ENCODE measurements at regions of chr5 and their contacts with region 1.

Region 1: GRCh38 chr5:170100066-170100943 is 5.4 kb upstream of the FOXI1 start:
- DNase-seq: peak; percentile 87
- H3K4me3 Mint-ChIP-seq: no peak overlapping the region
- H3K27ac Mint-ChIP-seq: no peak overlapping the region
- H3K4me1 Mint-ChIP-seq: peaks cover 3% of the 10 kb centered on the region
- H3K27me3 Mint-ChIP-seq: no peaks in the 10 kb centered on the region
- CTCF ChIP-seq: peak; percentile 81

Region 2: DNA sequence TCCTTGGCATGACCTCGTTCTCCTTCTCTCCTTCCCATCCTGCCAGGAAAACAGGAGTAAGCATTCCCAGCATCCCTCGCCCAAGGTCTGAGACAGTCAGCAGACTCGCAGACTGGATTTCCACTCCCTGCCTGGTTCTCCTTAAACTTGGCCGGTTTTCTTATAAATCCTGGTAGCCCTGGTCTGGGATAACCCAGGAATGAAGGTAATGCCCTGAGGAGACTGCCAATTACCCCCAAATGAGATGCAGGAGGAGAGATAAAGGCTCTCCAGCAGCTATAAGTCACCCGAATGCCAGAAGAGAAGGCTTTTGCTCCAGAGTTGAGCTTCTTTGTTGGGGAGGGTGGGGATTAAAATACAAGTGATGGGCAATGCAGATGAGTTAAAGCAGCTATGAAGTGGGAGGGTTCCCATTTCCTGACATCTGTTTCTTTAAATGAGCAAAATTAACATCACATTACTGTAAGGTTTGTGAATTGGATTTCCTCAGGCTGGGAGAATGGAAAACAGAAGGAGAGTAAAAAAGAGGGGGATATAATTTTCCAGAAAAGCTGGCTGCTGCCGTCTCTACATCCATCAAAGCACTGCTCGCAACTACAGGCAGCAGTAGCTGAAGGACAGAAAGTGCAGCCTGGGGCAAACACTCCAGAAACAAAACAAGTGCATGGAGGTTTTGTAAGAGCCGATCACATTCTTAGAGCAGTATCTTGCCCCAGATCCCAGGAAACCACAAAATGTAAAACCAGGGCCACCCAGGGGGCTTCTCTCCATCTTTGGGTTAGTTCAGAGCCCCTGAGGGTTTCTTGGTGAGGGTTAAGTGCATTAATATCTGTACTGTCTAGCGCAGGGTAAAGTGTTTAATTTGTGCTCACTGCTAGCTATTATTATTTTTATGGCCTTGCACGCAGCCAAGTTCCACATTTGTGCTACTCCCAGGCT is 1343.6 kb before region 1 on chr5:
- CTCF ChIA-PET with region 1: no interaction called
- POLR2A ChIA-PET with region 1: no interaction called
- intact Hi-C with region 1: no loop called
- DNase-seq: no peak
- H3K4me3 Mint-ChIP-seq: no peak overlapping the region
- H3K27ac Mint-ChIP-seq: no peak overlapping the region
- H3K4me1 Mint-ChIP-seq: no peaks in the 10 kb centered on the region
- H3K27me3 Mint-ChIP-seq: no peaks in the 10 kb centered on the region
- CTCF ChIP-seq: no peak

Region 3: DNA sequence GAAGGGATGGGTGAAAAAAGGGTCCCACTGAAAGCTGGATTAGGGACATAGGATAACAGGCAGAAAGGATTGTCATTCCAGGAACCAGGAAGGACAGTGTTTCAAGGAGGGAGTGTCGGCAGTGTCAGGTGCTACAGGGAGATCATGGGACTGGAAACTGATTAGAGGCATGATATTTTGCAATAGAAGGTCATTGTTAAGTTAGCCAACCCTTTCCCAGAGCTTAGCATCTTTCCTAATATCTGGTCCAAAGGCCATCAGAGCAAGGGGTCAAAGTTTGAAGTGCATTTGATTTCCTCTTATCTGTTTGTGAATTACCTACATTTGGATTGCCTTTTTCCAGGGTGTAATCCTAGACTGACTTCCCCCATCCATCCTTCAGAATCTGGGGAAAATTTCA is 371.9 kb before region 1 on chr5:
- CTCF ChIA-PET with region 1: no interaction called
- POLR2A ChIA-PET with region 1: no interaction called
- intact Hi-C with region 1: no loop called
- DNase-seq: no peak
- H3K4me3 Mint-ChIP-seq: no peak overlapping the region
- H3K27ac Mint-ChIP-seq: no peak overlapping the region
- H3K4me1 Mint-ChIP-seq: no peaks in the 10 kb centered on the region
- H3K27me3 Mint-ChIP-seq: no peaks in the 10 kb centered on the region
- CTCF ChIP-seq: no peak

Region 4: GRCh38 chr5:169826618-169827017 is 273.7 kb before region 1 on chr5:
- CTCF ChIA-PET with region 1: no interaction called
- POLR2A ChIA-PET with region 1: no interaction called
- intact Hi-C with region 1: no loop called
- DNase-seq: no peak
- H3K4me3 Mint-ChIP-seq: no peak overlapping the region
- H3K27ac Mint-ChIP-seq: no peak overlapping the region
- H3K4me1 Mint-ChIP-seq: peaks cover 7% of the 10 kb centered on the region
- H3K27me3 Mint-ChIP-seq: peaks cover 10% of the 10 kb centered on the region
- CTCF ChIP-seq: no peak

Region 5: GRCh38 chr5:170056561-170057267 is 43.6 kb before region 1 on chr5:
- CTCF ChIA-PET with region 1: interaction called, 13 read pairs
- POLR2A ChIA-PET with region 1: no interaction called
- intact Hi-C with region 1: no loop called
- DNase-seq: no peak
- H3K4me3 Mint-ChIP-seq: no peak overlapping the region
- H3K27ac Mint-ChIP-seq: no peak overlapping the region
- H3K4me1 Mint-ChIP-seq: no peaks in the 10 kb centered on the region
- H3K27me3 Mint-ChIP-seq: no peaks in the 10 kb centered on the region
- CTCF ChIP-seq: no peak

Region 6: DNA sequence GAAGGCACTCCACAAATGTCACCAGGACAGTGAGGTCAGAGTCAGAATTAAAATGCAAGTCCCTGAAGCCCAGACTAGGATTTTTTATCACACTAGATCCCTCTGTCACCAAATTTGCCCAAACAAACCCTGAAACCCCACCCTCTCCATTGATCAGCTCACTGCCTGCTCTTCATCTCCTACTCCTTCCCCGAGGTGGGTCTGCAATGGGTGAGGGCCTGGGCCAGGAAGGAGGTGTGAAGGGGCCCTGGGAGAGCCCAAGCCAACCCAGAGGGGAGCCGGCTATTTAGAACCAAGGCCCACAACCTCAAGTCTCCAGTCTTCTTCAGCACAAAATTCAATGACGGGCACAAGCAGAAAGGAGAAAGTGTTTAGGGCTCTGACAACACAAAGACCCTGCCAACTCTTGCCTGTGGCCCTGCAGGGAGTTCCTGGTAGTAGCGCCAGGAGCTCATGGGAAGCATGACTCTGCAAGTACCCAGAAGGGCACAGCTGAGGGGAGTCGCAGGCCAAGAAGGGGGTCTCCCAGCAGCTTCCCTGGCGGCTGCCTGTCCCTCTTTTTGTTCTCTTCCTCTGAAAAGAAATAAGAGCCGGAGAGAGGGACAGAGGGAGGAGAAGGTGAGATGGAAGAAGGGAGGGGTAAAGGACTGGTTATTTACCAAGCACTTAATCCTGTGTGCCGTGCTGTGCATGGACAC is 10.9 kb after region 1 on chr5:
- CTCF ChIA-PET with region 1: interaction called, 53 read pairs
- POLR2A ChIA-PET with region 1: no interaction called
- intact Hi-C with region 1: no loop called
- DNase-seq: no peak
- H3K4me3 Mint-ChIP-seq: no peak overlapping the region
- H3K27ac Mint-ChIP-seq: no peak overlapping the region
- H3K4me1 Mint-ChIP-seq: no peaks in the 10 kb centered on the region
- H3K27me3 Mint-ChIP-seq: no peaks in the 10 kb centered on the region
- CTCF ChIP-seq: no peak

Region 7: DNA sequence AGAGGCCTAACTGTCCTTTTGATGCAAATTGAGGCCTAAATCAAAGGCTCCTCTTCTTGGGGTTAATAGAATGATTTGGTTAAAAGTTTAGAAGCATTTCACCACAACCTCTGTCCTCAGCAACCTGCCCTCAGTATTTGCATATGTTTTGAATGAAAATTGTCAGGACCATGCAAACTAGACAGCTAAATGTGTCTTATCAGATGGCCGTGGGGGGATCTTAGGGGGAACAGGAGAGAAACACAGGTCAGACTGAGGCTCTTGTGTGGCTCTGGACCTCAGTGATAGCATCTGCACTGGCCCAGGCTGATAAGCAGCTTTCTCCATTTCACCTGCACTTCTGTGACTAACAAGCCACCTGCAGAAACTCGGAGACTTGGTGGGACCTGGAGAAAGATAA is 54.4 kb after region 1 on chr5:
- CTCF ChIA-PET with region 1: interaction called, 19 read pairs
- POLR2A ChIA-PET with region 1: no interaction called
- intact Hi-C with region 1: no loop called
- DNase-seq: no peak
- H3K4me3 Mint-ChIP-seq: no peak overlapping the region
- H3K27ac Mint-ChIP-seq: no peak overlapping the region
- H3K4me1 Mint-ChIP-seq: peaks cover 12% of the 10 kb centered on the region
- H3K27me3 Mint-ChIP-seq: no peaks in the 10 kb centered on the region
- CTCF ChIP-seq: no peak

Region 8: GRCh38 chr5:170200876-170201275 is 100.6 kb after region 1 on chr5:
- CTCF ChIA-PET with region 1: interaction called, 633 read pairs
- POLR2A ChIA-PET with region 1: interaction called, 3 read pairs
- intact Hi-C with region 1: no loop called
- DNase-seq: no peak
- H3K4me3 Mint-ChIP-seq: no peak overlapping the region
- H3K27ac Mint-ChIP-seq: no peak overlapping the region
- H3K4me1 Mint-ChIP-seq: no peaks in the 10 kb centered on the region
- H3K27me3 Mint-ChIP-seq: peaks cover 26% of the 10 kb centered on the region
- CTCF ChIP-seq: no peak

Region 9: DNA sequence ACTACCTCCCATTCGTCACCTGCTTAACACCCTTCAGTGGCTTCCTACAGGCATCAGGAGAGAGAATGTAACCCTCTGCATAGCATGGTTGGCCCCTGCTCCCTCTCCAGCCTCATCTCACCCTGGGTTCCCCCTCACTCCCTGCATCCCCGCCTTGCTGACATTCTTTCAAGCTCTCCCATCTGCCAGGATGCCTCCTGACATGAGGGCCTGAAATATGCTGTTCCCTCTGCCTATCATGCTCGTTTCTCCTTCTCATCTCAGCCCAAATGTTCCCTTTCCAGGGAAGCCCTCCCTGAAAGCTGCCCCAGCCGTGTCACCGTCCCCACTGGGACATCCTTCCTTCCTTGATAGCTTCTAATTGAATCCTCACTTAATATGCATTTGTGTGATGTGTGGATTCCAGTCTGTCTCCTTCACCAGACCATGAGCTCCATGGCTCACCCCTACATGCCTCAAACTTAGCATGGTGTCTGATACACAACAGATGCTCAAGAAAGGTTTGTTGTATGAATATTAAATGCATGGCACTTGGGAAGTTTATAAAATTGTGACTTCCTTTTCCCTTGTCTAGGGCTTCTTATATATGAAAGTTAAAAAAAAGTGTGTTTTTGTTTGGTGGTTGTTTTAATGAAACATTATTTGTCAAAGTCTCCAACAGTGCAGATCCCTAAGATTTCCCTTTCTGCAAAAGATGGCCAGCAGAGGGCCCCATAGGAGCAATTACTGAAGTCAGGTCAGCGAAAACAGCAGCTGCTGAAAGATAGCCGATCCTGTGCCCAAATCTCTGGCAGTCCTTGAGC is 125.2 kb after region 1 on chr5:
- CTCF ChIA-PET with region 1: interaction called, 34 read pairs
- POLR2A ChIA-PET with region 1: no interaction called
- intact Hi-C with region 1: no loop called
- DNase-seq: peak; percentile 83
- H3K4me3 Mint-ChIP-seq: no peak overlapping the region
- H3K27ac Mint-ChIP-seq: no peak overlapping the region
- H3K4me1 Mint-ChIP-seq: no peaks in the 10 kb centered on the region
- H3K27me3 Mint-ChIP-seq: no peaks in the 10 kb centered on the region
- CTCF ChIP-seq: peak; percentile 90

Region 10: DNA sequence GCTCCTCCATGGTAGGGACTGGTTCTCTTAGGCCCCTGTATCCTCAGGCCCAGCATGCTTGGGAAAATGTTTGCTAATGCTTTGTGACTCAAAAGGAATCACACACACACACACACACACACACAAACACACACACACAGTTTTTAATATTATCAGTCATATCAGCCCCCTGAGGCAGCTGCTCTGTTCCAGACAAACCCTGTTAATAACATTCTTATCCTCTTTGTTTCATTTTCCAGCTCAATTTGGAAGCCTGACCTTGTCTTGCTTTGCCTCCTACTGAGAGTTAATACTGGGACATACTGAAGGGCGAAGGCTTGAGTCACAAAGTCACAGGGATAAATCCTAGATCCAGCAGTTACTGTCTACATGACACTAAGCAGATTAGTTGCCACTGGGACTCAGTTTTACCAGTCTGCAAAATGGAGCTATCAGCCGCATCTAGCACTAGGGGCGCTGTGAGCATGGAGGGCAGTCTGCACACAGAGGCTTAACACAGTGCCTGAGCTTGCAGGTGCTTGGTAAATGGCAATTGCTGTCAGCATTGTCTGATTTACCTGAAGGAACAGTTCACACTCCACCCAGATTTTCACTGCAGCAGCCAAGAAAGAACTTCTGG is 326.0 kb after region 1 on chr5:
- CTCF ChIA-PET with region 1: interaction called, 31 read pairs
- POLR2A ChIA-PET with region 1: no interaction called
- intact Hi-C with region 1: loop called (anchors 1 kb)
- DNase-seq: no peak
- H3K4me3 Mint-ChIP-seq: no peak overlapping the region
- H3K27ac Mint-ChIP-seq: no peak overlapping the region
- H3K4me1 Mint-ChIP-seq: no peaks in the 10 kb centered on the region
- H3K27me3 Mint-ChIP-seq: peaks cover 60% of the 10 kb centered on the region
- CTCF ChIP-seq: no peak

Region 11: DNA sequence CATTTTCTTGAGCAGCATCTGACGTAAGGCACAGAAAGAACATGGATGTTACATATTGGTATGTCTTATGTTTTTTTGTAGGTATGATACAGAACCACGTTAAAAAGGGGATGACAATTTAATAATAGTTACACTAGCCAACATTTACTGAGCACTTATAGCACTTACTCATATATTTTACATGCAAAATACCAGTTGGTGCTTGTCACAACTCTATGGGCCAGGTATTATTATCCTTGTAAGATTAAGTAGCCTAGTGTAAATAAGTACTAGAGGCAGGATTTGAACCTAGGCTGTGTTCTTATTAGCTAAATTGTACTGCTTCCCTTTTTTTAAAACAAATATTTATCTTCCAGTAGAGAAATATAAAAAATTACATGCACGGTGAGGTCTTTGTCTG is 845.0 kb after region 1 on chr5:
- CTCF ChIA-PET with region 1: no interaction called
- POLR2A ChIA-PET with region 1: no interaction called
- intact Hi-C with region 1: no loop called
- DNase-seq: no peak
- H3K4me3 Mint-ChIP-seq: no peak overlapping the region
- H3K27ac Mint-ChIP-seq: no peak overlapping the region
- H3K4me1 Mint-ChIP-seq: peaks cover 6% of the 10 kb centered on the region
- H3K27me3 Mint-ChIP-seq: no peaks in the 10 kb centered on the region
- CTCF ChIP-seq: no peak

Measured in MCF 10A (cell line).